ENCODE measurements at regions of chr3 and their contacts with region 1.

Region 1: GRCh38 chr3:49021813-49022687 is at the start of gene NDUFAF3:
- DNase-seq: peak; percentile 94
- H3K4me3 Mint-ChIP-seq: peak within 1 kb of the TSS; percentile 90
- H3K27ac Mint-ChIP-seq: peak within 1 kb of the TSS; percentile 99
- H3K4me1 Mint-ChIP-seq: peaks cover 60% of the 10 kb centered on the region
- H3K27me3 Mint-ChIP-seq: no peaks in the 10 kb centered on the region

Region 2: GRCh38 chr3:49007068-49007770 is 14.8 kb before region 1 on chr3 and contains the start of gene WDR6:
- CTCF ChIA-PET with region 1: interaction called, 62 read pairs
- DNase-seq: peak; percentile 99
- H3K4me3 Mint-ChIP-seq: peak within 1 kb of the TSS; percentile 98
- H3K27ac Mint-ChIP-seq: peak within 1 kb of the TSS; percentile 99
- H3K4me1 Mint-ChIP-seq: peaks cover 38% of the 10 kb centered on the region
- H3K27me3 Mint-ChIP-seq: no peaks in the 10 kb centered on the region

Region 3: GRCh38 chr3:49248846-49249238 is 226.8 kb after region 1 on chr3:
- CTCF ChIA-PET with region 1: no interaction called
- DNase-seq: no peak
- H3K4me3 Mint-ChIP-seq: no peak overlapping the region
- H3K27ac Mint-ChIP-seq: no peak overlapping the region
- H3K4me1 Mint-ChIP-seq: no peaks in the 10 kb centered on the region
- H3K27me3 Mint-ChIP-seq: no peaks in the 10 kb centered on the region

Measured in activated naive CD4-positive, alpha-beta T cell treated with anti-CD3 and anti-CD28 coated beads, Interleukin-2, amount 10 ng/mL, durations not matched to agents 7 days and 5 days (primary cell).